Prostate gland (tissue), 2 donors: ENCODE measurements at regions of chr6 and their contacts with region 1.

Region 1: GRCh38 chr6:41735427-41736356 is at the start of gene TFEB:
- DNase-seq: peak; percentile 94
- H3K4me3 ChIP-seq: peak within 1 kb of the TSS; percentile 95 to 96
- H3K27ac ChIP-seq: peak within 1 kb of the TSS; percentile 98 to 99
- H3K4me1 ChIP-seq: peaks cover 19% of the 10 kb centered on the region
- H3K27me3 ChIP-seq: no peaks in the 10 kb centered on the region
- CTCF ChIP-seq: peak; percentile 94 to 100 (median 98)
- POLR2A ChIP-seq: peak; percentile 52
- total RNA-seq, gene TFEB: 28.4 to 31.2 TPM

Region 2: DNA sequence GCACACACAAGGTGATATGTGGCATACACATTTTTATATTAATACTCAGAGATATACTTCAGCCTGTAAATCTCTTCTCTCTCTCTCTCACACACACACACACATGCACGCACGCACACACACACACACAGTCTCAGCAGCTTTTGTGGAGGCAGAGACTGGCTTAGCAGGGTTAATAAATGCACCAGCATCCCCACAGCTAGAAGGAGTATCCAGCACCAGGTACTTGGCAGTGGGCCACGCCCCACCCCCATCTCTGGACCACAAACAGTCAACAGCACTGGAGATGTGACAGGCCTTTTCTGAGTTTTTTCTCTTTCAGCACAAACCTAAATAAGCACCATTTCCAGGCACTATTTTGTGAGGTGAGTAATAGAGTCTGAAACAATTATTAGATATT is 1101.3 kb before region 1 on chr6:
- intact Hi-C with region 1: no loop called
- DNase-seq: no peak
- H3K4me3 ChIP-seq: no peak overlapping the region
- H3K27ac ChIP-seq: no peak overlapping the region
- H3K4me1 ChIP-seq: no peaks in the 10 kb centered on the region
- H3K27me3 ChIP-seq: no peaks in the 10 kb centered on the region
- CTCF ChIP-seq: no peak
- POLR2A ChIP-seq: no peak

Region 3: DNA sequence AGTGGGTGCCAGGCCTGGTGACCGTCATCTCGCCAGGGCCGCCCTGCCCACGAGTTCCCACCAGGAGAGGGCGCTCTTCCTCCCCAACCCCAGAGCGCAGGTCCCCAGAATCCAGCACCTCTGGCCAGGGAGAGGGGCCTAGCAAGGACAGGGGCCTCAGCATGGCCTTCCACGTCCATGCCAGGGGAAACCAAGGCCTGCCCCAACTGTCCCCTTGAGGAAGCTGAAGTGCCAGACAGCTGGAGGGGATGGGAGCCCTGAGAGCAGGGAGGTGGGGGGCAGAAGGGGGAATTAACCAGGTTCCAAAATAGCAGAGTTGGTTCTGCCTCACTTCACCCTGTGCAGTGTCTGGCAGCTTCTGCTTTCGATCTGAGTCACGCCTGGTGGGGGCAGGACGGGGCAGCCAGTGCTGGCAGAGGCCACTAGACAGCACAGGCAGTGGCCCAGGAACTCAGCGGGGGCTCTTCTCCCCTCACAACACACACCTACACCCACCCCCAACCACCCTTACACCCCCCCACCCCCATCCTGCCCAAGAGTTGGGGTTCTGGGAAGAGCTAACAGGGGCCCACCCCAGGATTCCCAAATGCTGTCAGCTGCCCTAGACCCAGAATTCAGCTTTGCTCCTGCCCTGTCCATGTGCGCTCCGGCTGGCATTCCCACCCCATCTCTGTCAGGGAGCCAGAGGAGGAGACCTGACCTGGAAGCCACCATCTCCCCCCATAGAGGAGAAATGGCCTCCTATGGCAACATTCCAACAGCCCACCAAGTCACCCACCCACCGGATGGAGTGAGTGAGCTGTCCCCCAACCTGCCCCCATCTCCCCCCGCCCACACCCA is 29.5 kb before region 1 on chr6:
- intact Hi-C with region 1: loop called (anchors 1 kb)
- DNase-seq: peak; percentile 78
- H3K4me3 ChIP-seq: no peak overlapping the region
- H3K27ac ChIP-seq: peak overlapping the region; percentile 74 to 79
- H3K4me1 ChIP-seq: peaks cover 30% of the 10 kb centered on the region
- H3K27me3 ChIP-seq: no peaks in the 10 kb centered on the region
- CTCF ChIP-seq: peak; percentile 51 to 87 (median 76)
- POLR2A ChIP-seq: no peak

Region 4: GRCh38 chr6:41787219-41787917 is 51.7 kb after region 1 on chr6 and contains the start of gene TOMM6:
- intact Hi-C with region 1: loop called (anchors 2 kb)
- DNase-seq: peak; percentile 95
- H3K4me3 ChIP-seq: peak within 1 kb of the TSS; percentile 57 to 90
- H3K27ac ChIP-seq: peak within 1 kb of the TSS; percentile 92 to 93
- H3K4me1 ChIP-seq: peaks cover 20% of the 10 kb centered on the region
- H3K27me3 ChIP-seq: no peaks in the 10 kb centered on the region
- CTCF ChIP-seq: peak; percentile 90 to 99 (median 94)
- POLR2A ChIP-seq: peak; percentile 82
- total RNA-seq, gene TOMM6: 158 to 233 TPM

Region 5: DNA sequence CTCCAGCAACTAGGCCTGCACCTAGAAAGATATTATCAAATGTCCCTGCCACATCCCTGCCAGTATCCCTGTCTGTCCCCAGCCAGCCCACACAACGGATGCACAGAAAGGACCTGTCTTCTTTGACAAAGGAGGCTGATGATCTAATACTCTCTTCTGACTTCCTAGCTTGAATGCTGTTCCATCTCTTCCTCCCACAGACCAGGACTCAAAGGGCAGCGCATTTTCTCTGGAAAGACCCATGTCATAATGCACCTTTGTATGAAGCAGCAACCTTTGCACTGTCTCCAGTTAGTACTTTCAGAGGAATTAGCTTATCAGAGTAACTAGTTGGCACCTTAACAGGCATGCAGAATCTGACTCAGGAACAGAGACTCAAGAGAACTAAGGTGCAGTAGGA is 261.3 kb after region 1 on chr6:
- intact Hi-C with region 1: no loop called
- DNase-seq: no peak
- H3K4me3 ChIP-seq: no peak overlapping the region
- H3K27ac ChIP-seq: no peak overlapping the region
- H3K4me1 ChIP-seq: no peaks in the 10 kb centered on the region
- H3K27me3 ChIP-seq: no peaks in the 10 kb centered on the region
- CTCF ChIP-seq: no peak
- POLR2A ChIP-seq: no peak